Naive thymus-derived CD4-positive, alpha-beta T cell (primary cell): ENCODE measurements at regions of chr17 and their contacts with region 1.

Region 1: GRCh38 chr17:57255776-57256681 is at the start of gene MSI2:
- DNase-seq: peak; percentile 80 to 93 (median 85)
- ATAC-seq: peak; percentile 89
- H3K4me3 ChIP-seq: peak within 1 kb of the TSS; percentile 87
- H3K4me3 Mint-ChIP-seq: peak within 1 kb of the TSS; percentile 90 to 100 (median 96)
- H3K27ac ChIP-seq: peak within 1 kb of the TSS; percentile 83
- H3K27ac Mint-ChIP-seq: peak within 1 kb of the TSS; percentile 85 to 98 (median 91)
- H3K4me1 ChIP-seq: peaks cover 13 to 28% of the 10 kb centered on the region in 2 donors
- H3K4me1 Mint-ChIP-seq: peaks cover 21 to 57% (median 46%) of the 10 kb centered on the region in 7 donors
- H3K27me3 ChIP-seq: no peaks in the 10 kb centered on the region
- H3K27me3 Mint-ChIP-seq: peaks cover 0 to 4% (median 0%) of the 10 kb centered on the region in 5 donors
- total RNA-seq, gene MSI2: 111 to 169 (median 150) TPM

Region 2: DNA sequence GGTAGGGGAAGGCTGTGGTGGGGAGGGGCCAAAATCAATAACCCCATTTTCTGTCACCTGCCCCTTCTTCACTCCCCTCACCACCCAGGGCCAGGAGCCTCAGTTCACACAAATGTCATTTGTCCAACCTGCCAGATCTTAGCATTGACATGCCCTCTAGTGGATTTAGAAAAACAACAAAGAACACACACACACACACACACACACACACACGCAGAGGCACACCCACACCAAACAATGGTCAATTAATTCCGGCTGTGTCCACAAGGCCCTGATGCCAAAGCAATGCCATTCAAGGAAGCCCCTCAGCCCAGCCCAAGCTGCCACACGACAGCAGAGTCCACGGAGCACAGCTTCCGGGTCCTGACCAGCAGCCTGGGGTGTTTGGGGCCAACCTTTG is 594.1 kb before region 1 on chr17:
- CTCF ChIA-PET with region 1: no interaction called
- POLR2A ChIA-PET with region 1: no interaction called
- intact Hi-C with region 1: no loop called
- DNase-seq: no peak
- ATAC-seq: no peak
- H3K4me3 ChIP-seq: no peak overlapping the region
- H3K4me3 Mint-ChIP-seq: no peak overlapping the region
- H3K27ac ChIP-seq: no peak overlapping the region
- H3K27ac Mint-ChIP-seq: no peak overlapping the region
- H3K4me1 ChIP-seq: no peaks in the 10 kb centered on the region
- H3K4me1 Mint-ChIP-seq: peaks cover 0 to 5% (median 0%) of the 10 kb centered on the region in 7 donors
- H3K27me3 ChIP-seq: no peaks in the 10 kb centered on the region
- H3K27me3 Mint-ChIP-seq: peaks cover 0 to 24% (median 17%) of the 10 kb centered on the region in 5 donors

Region 3: DNA sequence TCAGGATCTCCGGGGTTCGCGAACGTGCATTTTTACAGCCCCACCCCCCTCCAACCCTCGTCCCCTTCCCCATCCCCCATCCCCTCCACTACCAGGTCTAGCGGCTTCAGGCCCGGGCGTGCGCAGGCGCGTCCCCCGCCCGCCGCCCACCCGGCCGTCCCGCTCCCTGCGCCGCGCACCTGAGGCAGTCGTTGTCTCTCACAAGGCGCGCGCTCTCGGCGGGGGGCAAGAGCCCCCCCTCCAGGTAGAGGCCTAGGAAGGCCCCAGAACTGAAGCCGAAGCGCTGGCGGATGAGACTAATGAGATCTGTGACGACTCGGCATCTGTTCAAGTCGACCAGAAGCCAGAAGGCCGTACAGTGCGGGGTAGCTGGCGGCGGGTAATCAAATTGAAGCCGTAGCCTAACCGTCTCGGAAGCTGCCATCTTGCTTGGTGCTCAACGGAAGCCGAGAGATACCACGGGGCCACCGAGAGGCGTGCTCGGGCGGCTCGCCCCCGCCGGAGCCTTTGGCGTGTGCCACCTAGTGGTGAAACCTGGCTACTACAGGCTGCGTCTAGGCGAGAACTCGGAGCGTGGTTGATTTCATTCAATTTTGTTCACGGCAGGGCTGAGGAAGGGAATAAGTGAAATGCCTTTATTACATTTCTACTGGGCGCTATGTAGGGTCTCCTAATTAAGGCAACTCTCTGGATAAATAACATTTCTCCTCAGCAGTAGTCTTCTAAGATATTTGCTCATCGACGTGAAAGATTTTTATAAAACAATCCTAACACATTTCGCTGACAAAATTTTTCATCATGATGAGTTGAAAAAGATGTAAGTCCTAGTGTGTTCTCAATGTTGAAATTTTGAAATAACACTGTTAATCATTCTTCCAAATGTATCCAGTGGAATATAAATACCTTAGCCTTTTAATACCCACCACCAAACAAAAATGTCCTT is 295.2 kb before region 1 on chr17 and contains the start of gene COIL:
- CTCF ChIA-PET with region 1: no interaction called
- POLR2A ChIA-PET with region 1: no interaction called
- intact Hi-C with region 1: loop called in 1 of 2 experiments (anchors 5 kb)
- DNase-seq: peak; percentile 90 to 96 (median 92)
- ATAC-seq: peak; percentile 100
- H3K4me3 ChIP-seq: peak within 1 kb of the TSS; percentile 80
- H3K4me3 Mint-ChIP-seq: peak within 1 kb of the TSS; percentile 80 to 93 (median 86)
- H3K27ac ChIP-seq: peak within 1 kb of the TSS; percentile 97
- H3K27ac Mint-ChIP-seq: peak within 1 kb of the TSS; percentile 78 to 95 (median 91)
- H3K4me1 ChIP-seq: peaks cover 6 to 11% of the 10 kb centered on the region in 2 donors
- H3K4me1 Mint-ChIP-seq: peaks cover 14 to 34% (median 28%) of the 10 kb centered on the region in 7 donors
- H3K27me3 ChIP-seq: no peaks in the 10 kb centered on the region
- H3K27me3 Mint-ChIP-seq: peaks cover 0 to 3% (median 0%) of the 10 kb centered on the region in 5 donors
- total RNA-seq, gene COIL: 13.1 to 22.7 (median 19.0) TPM

Region 4: DNA sequence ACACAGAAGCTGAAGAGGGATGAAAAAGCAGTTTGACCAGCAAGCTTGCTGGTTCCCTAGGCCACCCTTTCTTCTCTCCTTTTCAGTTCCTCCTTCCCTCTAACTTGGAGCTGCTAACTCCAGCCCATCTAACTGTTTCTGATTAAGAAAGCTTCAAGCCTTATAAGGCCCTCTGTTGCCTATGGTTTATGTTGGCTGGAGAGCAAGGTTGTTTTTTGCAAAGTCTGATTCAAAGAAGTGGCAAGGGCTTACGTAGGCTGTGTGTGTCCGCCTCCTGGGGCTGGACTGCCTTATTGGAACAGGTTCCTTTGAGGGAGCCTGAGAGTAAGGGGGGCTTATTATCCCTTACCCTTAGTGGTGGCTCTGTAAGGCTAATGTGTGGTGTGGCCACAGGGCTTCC is 163.9 kb before region 1 on chr17:
- CTCF ChIA-PET with region 1: no interaction called
- POLR2A ChIA-PET with region 1: no interaction called
- intact Hi-C with region 1: no loop called
- DNase-seq: no peak
- ATAC-seq: no peak
- H3K4me3 ChIP-seq: no peak overlapping the region
- H3K4me3 Mint-ChIP-seq: no peak overlapping the region
- H3K27ac ChIP-seq: no peak overlapping the region
- H3K27ac Mint-ChIP-seq: no peak overlapping the region
- H3K4me1 ChIP-seq: peaks cover 0 to under 1% of the 10 kb centered on the region in 2 donors
- H3K4me1 Mint-ChIP-seq: peaks cover 10 to 59% (median 42%) of the 10 kb centered on the region in 7 donors
- H3K27me3 ChIP-seq: no peaks in the 10 kb centered on the region
- H3K27me3 Mint-ChIP-seq: no peaks in the 10 kb centered on the region

Region 5: GRCh38 chr17:57121338-57122042 is 134.5 kb before region 1 on chr17:
- CTCF ChIA-PET with region 1: no interaction called
- POLR2A ChIA-PET with region 1: no interaction called
- intact Hi-C with region 1: no loop called
- DNase-seq: no peak
- ATAC-seq: no peak
- H3K4me3 ChIP-seq: no peak overlapping the region
- H3K4me3 Mint-ChIP-seq: no peak overlapping the region
- H3K27ac ChIP-seq: no peak overlapping the region
- H3K27ac Mint-ChIP-seq: no peak overlapping the region
- H3K4me1 ChIP-seq: no peaks in the 10 kb centered on the region
- H3K4me1 Mint-ChIP-seq: peaks cover 0 to 5% (median 0%) of the 10 kb centered on the region in 7 donors
- H3K27me3 ChIP-seq: no peaks in the 10 kb centered on the region
- H3K27me3 Mint-ChIP-seq: no peaks in the 10 kb centered on the region

Region 6: DNA sequence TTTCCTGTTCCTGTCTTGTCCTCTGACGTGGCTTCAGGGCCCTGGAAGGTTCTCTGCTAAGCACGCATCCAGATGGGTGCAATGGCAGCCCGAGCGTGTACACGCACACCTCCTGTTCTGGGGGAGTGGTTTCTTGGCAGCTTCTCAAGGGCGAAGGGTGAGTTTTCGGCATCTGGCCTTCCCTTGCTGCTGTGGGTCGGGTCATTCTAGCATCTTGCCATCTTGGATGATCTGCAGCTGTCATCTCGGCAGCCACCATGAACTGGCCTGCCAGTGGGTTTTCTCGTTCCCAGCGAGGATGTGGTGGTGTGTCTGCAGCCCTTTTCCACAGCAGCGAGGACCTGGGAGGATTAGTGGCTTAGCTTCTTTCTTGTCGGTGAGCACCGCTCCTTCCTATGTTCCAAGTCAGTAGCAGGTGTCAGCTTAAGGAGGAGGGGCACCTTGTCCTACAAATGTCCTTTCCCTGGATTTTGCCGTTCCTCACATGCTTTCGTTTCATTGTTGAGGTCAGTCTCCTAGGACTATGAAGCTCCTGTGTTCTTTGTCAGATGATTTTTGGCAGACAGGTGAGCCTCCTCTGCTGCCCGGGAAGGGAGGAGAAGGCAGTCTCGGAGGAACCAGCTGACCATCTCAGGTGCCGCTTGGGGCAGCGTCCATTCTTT is 11.0 kb after region 1 on chr17:
- CTCF ChIA-PET with region 1: no interaction called
- POLR2A ChIA-PET with region 1: interaction called, 11 read pairs
- intact Hi-C with region 1: no loop called
- DNase-seq: no peak
- ATAC-seq: no peak
- H3K4me3 ChIP-seq: no peak overlapping the region
- H3K4me3 Mint-ChIP-seq: no peak overlapping the region
- H3K27ac ChIP-seq: no peak overlapping the region
- H3K27ac Mint-ChIP-seq: no peak overlapping the region
- H3K4me1 ChIP-seq: no peaks in the 10 kb centered on the region
- H3K4me1 Mint-ChIP-seq: peaks cover 36 to 80% (median 72%) of the 10 kb centered on the region in 7 donors
- H3K27me3 ChIP-seq: no peaks in the 10 kb centered on the region
- H3K27me3 Mint-ChIP-seq: no peaks in the 10 kb centered on the region

Region 7: GRCh38 chr17:57379237-57379894 is 123.3 kb after region 1 on chr17:
- CTCF ChIA-PET with region 1: no interaction called
- POLR2A ChIA-PET with region 1: no interaction called
- intact Hi-C with region 1: no loop called
- DNase-seq: no peak
- ATAC-seq: peak; percentile 32
- H3K4me3 ChIP-seq: no peak overlapping the region
- H3K4me3 Mint-ChIP-seq: peak overlapping the region in 3 of 10 donors; percentile 11 to 27 (median 15)
- H3K27ac ChIP-seq: no peak overlapping the region
- H3K27ac Mint-ChIP-seq: peak overlapping the region in 6 of 9 donors; percentile 13 to 58 (median 30)
- H3K4me1 ChIP-seq: no peaks in the 10 kb centered on the region
- H3K4me1 Mint-ChIP-seq: peaks cover 20 to 38% (median 27%) of the 10 kb centered on the region in 7 donors
- H3K27me3 ChIP-seq: no peaks in the 10 kb centered on the region
- H3K27me3 Mint-ChIP-seq: no peaks in the 10 kb centered on the region

Region 8: GRCh38 chr17:57408071-57408811 is 152.2 kb after region 1 on chr17:
- CTCF ChIA-PET with region 1: no interaction called
- POLR2A ChIA-PET with region 1: no interaction called
- intact Hi-C with region 1: loop called in 1 of 2 experiments (anchors 5 kb)
- DNase-seq: peak in 6 of 9 donors; percentile 14 to 31 (median 27)
- ATAC-seq: peak; percentile 72
- H3K4me3 ChIP-seq: no peak overlapping the region
- H3K4me3 Mint-ChIP-seq: peak overlapping the region; percentile 16 to 72 (median 54)
- H3K27ac ChIP-seq: peak overlapping the region; percentile 37
- H3K27ac Mint-ChIP-seq: peak overlapping the region; percentile 4 to 75 (median 50)
- H3K4me1 ChIP-seq: peaks cover 0 to 17% of the 10 kb centered on the region in 2 donors
- H3K4me1 Mint-ChIP-seq: peaks cover 38 to 78% (median 53%) of the 10 kb centered on the region in 7 donors
- H3K27me3 ChIP-seq: no peaks in the 10 kb centered on the region
- H3K27me3 Mint-ChIP-seq: no peaks in the 10 kb centered on the region

Region 9: GRCh38 chr17:57604771-57605674 is 349.0 kb after region 1 on chr17:
- CTCF ChIA-PET with region 1: no interaction called
- POLR2A ChIA-PET with region 1: no interaction called
- intact Hi-C with region 1: loop called (anchors 2 to 10 kb)
- DNase-seq: peak in 3 of 9 donors; percentile 11 to 65 (median 29)
- ATAC-seq: peak; percentile 37
- H3K4me3 ChIP-seq: peak overlapping the region; percentile 27
- H3K4me3 Mint-ChIP-seq: peak overlapping the region; percentile 67 to 84 (median 76)
- H3K27ac ChIP-seq: peak overlapping the region; percentile 76
- H3K27ac Mint-ChIP-seq: peak overlapping the region; percentile 89 to 100 (median 97)
- H3K4me1 ChIP-seq: peaks cover 67 to 71% of the 10 kb centered on the region in 2 donors
- H3K4me1 Mint-ChIP-seq: peaks cover 49 to 87% (median 75%) of the 10 kb centered on the region in 7 donors
- H3K27me3 ChIP-seq: no peaks in the 10 kb centered on the region
- H3K27me3 Mint-ChIP-seq: no peaks in the 10 kb centered on the region

Region 10: GRCh38 chr17:58006924-58007780 is 751.1 kb after region 1 on chr17 and contains the start of gene SRSF1:
- CTCF ChIA-PET with region 1: no interaction called
- POLR2A ChIA-PET with region 1: no interaction called
- intact Hi-C with region 1: loop called in 1 of 2 experiments (anchors 1 kb)
- DNase-seq: peak; percentile 95 to 99 (median 98)
- ATAC-seq: peak; percentile 92
- H3K4me3 ChIP-seq: peak within 1 kb of the TSS; percentile 99
- H3K4me3 Mint-ChIP-seq: peak within 1 kb of the TSS; percentile 96 to 100 (median 99)
- H3K27ac ChIP-seq: peak within 1 kb of the TSS; percentile 93
- H3K27ac Mint-ChIP-seq: peak within 1 kb of the TSS; percentile 99 to 100 (median 99)
- H3K4me1 ChIP-seq: peaks cover 31 to 32% of the 10 kb centered on the region in 2 donors
- H3K4me1 Mint-ChIP-seq: peaks cover 33 to 60% (median 54%) of the 10 kb centered on the region in 7 donors
- H3K27me3 ChIP-seq: no peaks in the 10 kb centered on the region
- H3K27me3 Mint-ChIP-seq: peaks cover 0 to 3% (median 0%) of the 10 kb centered on the region in 5 donors
- total RNA-seq, gene SRSF1: 115 to 362 (median 249) TPM